Activated CD4-positive, alpha-beta T cell treated with anti-CD3 and anti-CD28 coated beads for 36 hours (primary cell): ENCODE measurements at regions of chr19 and their contacts with region 1.

Region 1: DNA sequence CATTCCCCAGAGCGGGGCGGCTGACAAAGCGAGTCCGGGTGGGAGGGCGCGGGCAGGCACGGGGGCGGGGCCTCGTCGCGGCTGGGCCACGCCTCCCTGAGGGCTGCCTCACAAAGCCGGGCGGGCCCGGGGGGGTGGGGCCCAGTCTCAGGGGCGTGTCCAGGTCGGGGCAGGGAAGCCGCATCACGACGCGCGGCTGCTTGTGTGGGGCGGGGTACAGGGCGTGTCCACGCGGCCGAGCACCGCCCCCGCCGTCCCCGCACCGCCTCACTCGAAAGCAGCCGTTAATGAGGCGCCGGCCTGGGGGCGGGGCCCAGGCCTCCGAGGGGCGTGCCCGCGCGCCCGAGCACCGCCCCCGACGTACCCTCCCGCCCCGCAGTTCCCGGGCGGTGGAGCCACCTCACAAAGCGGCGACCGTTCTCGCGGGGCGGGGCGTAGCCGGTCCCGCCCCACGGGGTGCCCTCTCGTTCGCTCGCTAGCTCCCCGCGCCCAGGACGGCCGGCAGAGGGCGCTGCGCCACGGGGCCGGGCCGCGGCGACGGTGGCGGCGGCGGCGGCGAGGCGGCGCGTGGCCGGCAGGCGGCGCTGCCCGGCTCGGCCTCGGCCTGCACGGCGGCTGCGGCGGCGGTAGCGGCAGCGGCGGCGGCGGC is at the start of gene CARM1:
- DNase-seq: peak; percentile 100
- ATAC-seq: peak; percentile 88
- H3K4me3 Mint-ChIP-seq: peak within 1 kb of the TSS; percentile 80
- H3K27ac Mint-ChIP-seq: peak within 1 kb of the TSS; percentile 97
- H3K4me1 Mint-ChIP-seq: peaks cover 28% of the 10 kb centered on the region
- H3K27me3 Mint-ChIP-seq: no peaks in the 10 kb centered on the region
- total RNA-seq, gene CARM1: 82.3 to 96.8 TPM

Region 2: GRCh38 chr19:10467104-10467706 is 403.9 kb before region 1 on chr19:
- CTCF ChIA-PET with region 1: no interaction called
- POLR2A ChIA-PET with region 1: no interaction called
- intact Hi-C with region 1: no loop called
- DNase-seq: no peak
- ATAC-seq: no peak
- H3K4me3 Mint-ChIP-seq: no peak overlapping the region
- H3K27ac Mint-ChIP-seq: no peak overlapping the region
- H3K4me1 Mint-ChIP-seq: no peaks in the 10 kb centered on the region
- H3K27me3 Mint-ChIP-seq: peaks cover 5% of the 10 kb centered on the region

Region 3: DNA sequence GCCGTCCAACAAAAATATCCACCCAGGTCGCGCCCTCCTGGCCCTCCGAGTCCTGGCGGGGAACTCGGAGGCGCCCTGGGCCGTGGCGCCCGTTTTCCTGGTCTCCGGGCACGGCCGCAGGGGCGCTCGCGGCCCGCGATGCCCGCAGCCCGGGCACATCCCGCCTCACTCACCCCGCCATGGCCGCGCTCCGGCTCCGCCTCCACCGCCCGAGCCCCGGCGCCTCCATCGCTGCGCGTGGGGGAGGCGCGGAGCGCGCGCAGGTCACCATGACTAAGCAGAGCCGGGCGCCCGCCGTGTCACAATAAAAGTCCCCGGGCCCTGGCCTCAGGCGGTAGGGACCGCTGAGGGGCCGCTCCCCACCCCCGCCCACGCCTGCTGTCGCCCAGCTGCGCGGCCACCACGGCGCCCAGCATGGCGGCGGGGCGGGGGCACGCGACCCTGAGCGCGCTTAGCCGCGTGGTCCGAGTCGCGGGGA is 368.5 kb before region 1 on chr19:
- CTCF ChIA-PET with region 1: no interaction called
- POLR2A ChIA-PET with region 1: no interaction called
- intact Hi-C with region 1: loop called in 1 of 2 experiments (anchors 1 kb)
- DNase-seq: peak; percentile 95
- ATAC-seq: peak; percentile 91
- H3K4me3 Mint-ChIP-seq: peak overlapping the region; percentile 91
- H3K27ac Mint-ChIP-seq: peak overlapping the region; percentile 95
- H3K4me1 Mint-ChIP-seq: peaks cover 30% of the 10 kb centered on the region
- H3K27me3 Mint-ChIP-seq: no peaks in the 10 kb centered on the region

Region 4: GRCh38 chr19:10797541-10798256 is 73.4 kb before region 1 on chr19:
- CTCF ChIA-PET with region 1: no interaction called
- POLR2A ChIA-PET with region 1: no interaction called
- intact Hi-C with region 1: loop called in 1 of 2 experiments (anchors 1 kb)
- DNase-seq: peak; percentile 95
- ATAC-seq: peak; percentile 94
- H3K4me3 Mint-ChIP-seq: peak overlapping the region; percentile 68
- H3K27ac Mint-ChIP-seq: peak overlapping the region; percentile 97
- H3K4me1 Mint-ChIP-seq: peaks cover 36% of the 10 kb centered on the region
- H3K27me3 Mint-ChIP-seq: no peaks in the 10 kb centered on the region

Region 5: DNA sequence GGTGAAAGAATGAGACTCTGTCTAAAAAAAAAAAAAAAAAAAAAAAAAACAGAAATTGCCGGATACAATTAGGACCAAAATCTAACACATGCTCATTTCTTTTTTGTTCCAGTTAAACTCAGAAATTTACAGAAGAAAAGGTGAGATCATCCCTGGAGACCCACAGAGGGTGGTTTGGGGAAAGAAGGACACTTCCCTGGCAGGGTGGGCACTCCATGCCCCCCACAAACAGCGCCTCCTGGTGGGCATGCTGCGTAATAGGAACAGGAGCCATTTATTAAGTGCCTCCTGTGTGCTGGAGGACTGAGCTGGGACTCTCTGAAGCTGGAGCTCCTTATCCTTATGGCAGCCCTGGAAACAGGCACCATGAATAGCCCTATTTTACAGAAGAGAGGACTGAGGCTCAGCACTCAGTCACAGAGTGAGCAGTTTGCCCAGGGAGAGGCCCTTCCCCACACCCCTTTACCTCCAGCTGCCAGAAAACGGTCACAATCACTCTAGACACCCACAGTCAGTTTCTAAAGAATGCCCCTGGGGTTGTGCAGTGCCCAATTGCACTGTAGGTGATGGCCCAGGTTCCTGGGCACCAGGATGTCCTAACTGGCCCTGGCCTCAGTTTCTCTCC is 12.8 kb before region 1 on chr19:
- CTCF ChIA-PET with region 1: interaction called, 70 read pairs
- POLR2A ChIA-PET with region 1: no interaction called
- intact Hi-C with region 1: no loop called
- DNase-seq: peak; percentile 64
- ATAC-seq: peak; percentile 69
- H3K4me3 Mint-ChIP-seq: no peak overlapping the region
- H3K27ac Mint-ChIP-seq: no peak overlapping the region
- H3K4me1 Mint-ChIP-seq: no peaks in the 10 kb centered on the region
- H3K27me3 Mint-ChIP-seq: no peaks in the 10 kb centered on the region

Region 6: DNA sequence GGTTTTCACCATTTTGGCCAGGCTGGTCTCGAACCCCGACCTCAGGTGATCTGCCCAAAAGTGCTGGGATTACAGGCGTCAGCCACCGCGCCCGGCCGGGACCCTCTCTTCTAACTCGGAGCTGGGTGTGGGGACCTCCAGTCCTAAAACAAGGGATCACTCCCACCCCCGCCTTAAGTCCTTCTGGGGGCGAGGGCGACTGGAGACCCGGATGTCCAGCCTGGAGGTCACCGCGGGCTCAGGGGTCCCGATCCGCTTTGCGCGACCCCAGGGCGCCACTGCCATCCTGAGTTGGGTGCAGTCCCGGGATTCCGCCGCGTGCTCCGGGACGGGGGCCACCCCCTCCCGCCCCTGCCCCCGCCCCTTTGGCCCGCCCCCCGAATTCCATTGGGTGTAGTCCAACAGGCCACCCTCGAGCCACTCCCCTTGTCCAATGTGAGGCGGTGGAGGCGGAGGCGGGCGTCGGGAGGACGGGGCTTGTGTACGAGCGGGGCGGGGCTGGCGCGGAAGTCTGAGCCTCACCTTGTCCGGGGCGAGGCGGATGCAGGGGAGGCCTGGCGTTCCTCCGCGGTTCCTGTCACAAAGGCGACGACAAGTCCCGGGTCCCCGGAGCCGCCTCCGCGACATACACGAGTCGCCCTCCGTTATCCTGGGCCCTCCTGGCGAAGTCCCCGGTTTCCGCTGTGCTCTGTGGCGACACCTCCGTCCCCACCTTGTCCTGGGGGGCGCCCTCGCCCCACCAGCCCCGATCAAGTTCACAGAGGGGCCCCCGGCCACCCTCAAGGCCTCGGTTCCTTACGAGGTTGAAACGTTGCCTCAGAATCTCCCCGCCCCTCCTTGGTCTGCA is 219.2 kb after region 1 on chr19:
- CTCF ChIA-PET with region 1: interaction called, 3 read pairs
- POLR2A ChIA-PET with region 1: no interaction called
- intact Hi-C with region 1: loop called in 1 of 2 experiments (anchors 1 kb)
- DNase-seq: peak; percentile 99
- ATAC-seq: peak; percentile 88
- H3K4me3 Mint-ChIP-seq: peak overlapping the region; percentile 93
- H3K27ac Mint-ChIP-seq: peak overlapping the region; percentile 97
- H3K4me1 Mint-ChIP-seq: peaks cover 51% of the 10 kb centered on the region
- H3K27me3 Mint-ChIP-seq: no peaks in the 10 kb centered on the region

Region 7: GRCh38 chr19:11374433-11375142 is 503.5 kb after region 1 on chr19 and contains the start of gene SWSAP1:
- CTCF ChIA-PET with region 1: no interaction called
- POLR2A ChIA-PET with region 1: interaction called, 4 read pairs
- intact Hi-C with region 1: loop called in 1 of 2 experiments (anchors 2 kb)
- DNase-seq: peak; percentile 98
- ATAC-seq: peak; percentile 92
- H3K4me3 Mint-ChIP-seq: no peak within 1 kb of the TSS
- H3K27ac Mint-ChIP-seq: no peak within 1 kb of the TSS
- H3K4me1 Mint-ChIP-seq: peaks cover 28% of the 10 kb centered on the region
- H3K27me3 Mint-ChIP-seq: no peaks in the 10 kb centered on the region
- total RNA-seq, gene SWSAP1: 1.5 to 1.7 TPM